PC-3 (cell line): ENCODE measurements at regions of chrX and their contacts with region 1.

Region 1: GRCh38 chrX:154478728-154479622 is at the start of gene LAGE3:
- DNase-seq: peak; percentile 87
- ATAC-seq: peak; percentile 89
- H3K4me3 ChIP-seq: peak within 1 kb of the TSS; percentile 72
- H3K27ac ChIP-seq: no peak within 1 kb of the TSS
- H3K4me1 ChIP-seq: peaks cover 12% of the 10 kb centered on the region
- H3K27me3 ChIP-seq: no peaks in the 10 kb centered on the region
- CTCF ChIP-seq: no peak
- total RNA-seq, gene LAGE3: 82.8 and 87.4 TPM in 2 replicates

Region 2: DNA sequence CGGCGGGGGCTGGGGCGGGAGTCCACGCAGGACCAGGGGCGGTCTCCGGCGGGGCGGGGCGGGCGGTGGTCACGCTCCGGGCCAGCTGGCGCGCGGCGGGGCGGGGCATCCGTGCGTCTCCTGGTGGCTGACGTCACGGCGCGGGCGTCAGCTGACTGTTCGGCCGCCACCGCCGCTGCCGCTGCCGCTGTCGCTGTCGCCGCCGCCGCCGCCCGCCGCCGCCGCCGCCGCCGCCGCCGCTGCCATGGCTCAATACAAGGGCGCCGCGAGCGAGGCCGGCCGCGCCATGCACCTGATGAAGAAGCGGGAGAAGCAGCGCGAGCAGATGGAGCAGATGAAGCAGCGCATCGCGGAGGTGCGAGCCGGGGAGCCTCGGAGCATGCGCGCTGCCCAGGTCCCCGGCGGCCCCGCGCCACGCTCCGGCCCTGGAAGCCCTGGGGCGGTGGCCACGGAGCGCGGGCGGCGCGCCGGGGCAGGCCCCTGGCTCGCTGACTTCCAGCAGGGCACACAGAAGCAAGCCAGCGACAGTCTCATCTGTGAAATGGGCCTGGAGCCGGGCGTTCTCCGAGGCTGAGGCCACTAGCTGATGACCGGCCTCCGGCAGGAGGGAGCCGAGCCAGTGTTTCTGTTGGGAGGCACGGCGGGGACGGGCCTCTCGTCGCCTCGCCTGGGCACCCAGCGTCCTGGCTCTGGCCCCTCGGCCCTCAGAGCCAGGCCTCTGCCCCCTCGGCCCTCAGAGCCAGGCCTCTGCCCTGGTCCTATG is 34.8 kb before region 1 on chrX and contains the start of gene FAM50A:
- CTCF ChIA-PET with region 1: no interaction called
- POLR2A ChIA-PET with region 1: no interaction called
- intact Hi-C with region 1: loop called (anchors 5 kb)
- DNase-seq: peak; percentile 61
- ATAC-seq: peak; percentile 85
- H3K4me3 ChIP-seq: peak within 1 kb of the TSS; percentile 93
- H3K27ac ChIP-seq: 0 out of 2 replicates have a peak within 1 kb of the TSS, but pooled peaks have one; percentile 18
- H3K4me1 ChIP-seq: peaks cover 23% of the 10 kb centered on the region
- H3K27me3 ChIP-seq: no peaks in the 10 kb centered on the region
- CTCF ChIP-seq: no peak
- total RNA-seq, gene FAM50A: 53.8 and 76.7 TPM in 2 replicates

Region 3: DNA sequence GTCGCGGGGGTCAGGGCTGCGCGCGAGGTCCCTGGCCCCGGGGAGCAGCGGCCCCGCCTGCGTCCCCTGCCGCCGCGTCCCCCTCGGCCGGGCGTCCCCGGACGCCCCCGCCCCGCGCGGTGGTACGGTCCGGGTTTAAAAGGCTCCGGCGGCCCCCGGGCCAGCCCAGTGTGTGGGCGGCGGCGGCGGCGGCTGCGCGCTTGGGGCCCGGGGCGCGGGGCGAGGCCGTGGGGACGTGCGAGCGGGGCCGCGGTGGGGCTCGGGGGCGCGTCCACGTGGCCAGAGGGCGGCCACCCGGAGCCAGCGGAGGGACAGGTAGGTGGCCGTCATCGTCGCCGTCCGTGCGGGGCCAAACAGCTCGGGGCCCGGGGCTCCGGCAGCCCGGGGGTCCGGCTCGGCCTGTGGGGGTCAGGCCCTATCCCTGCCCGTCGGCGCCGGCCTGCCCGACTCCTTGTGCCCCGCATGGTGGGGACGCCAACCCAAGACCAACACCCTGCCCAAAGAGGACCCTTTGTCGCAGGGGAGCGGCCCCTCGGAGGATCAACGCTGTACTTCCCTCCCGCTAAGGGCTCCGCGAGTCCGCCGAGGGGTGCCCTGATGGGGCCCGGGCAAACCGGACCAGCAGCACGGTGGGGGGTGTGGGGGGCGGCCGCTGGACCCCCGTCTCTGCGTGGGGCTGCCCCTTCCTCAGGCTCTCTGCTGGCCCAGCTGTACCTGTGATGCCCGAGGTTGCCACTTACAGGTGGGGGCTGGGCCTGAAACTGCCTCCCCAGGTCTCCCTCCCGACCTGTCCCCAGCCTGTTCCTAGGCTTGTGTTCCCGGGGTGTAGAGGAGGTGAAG is 20.6 kb before region 1 on chrX and contains the start of gene PLXNA3:
- CTCF ChIA-PET with region 1: no interaction called
- POLR2A ChIA-PET with region 1: interaction called, 11 read pairs
- intact Hi-C with region 1: no loop called
- DNase-seq: peak; percentile 46
- ATAC-seq: peak; percentile 64
- H3K4me3 ChIP-seq: peak within 1 kb of the TSS; percentile 82
- H3K27ac ChIP-seq: no peak within 1 kb of the TSS
- H3K4me1 ChIP-seq: no peaks in the 10 kb centered on the region
- H3K27me3 ChIP-seq: no peaks in the 10 kb centered on the region
- CTCF ChIP-seq: no peak
- total RNA-seq, gene PLXNA3: 5.3 and 21.8 TPM in 2 replicates